ENCODE measurements at regions of chr16 and their contacts with region 1.

Region 1: DNA sequence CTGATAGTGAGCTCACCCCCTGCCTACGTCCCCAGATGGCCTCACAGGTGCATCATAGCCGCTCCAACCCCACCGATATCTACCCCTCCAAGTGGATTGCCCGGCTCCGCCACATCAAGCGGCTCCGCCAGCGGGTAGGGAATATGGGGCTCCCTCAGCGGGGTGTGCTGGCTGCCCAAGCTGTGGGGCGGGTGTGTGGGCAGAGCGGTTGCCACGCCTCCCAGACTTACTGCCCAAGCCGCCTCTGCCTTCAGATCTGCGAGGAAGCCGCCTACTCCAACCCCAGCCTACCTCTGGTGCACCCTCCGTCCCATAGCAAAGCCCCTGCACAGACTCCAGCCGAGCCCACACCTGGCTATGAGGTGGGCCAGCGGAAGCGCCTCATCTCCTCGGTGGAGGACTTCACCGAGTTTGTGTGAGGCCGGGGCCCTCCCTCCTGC is 40.4 kb downstream of the TSC2 start:
- DNase-seq: no peak
- ATAC-seq: no peak
- H3K4me3 ChIP-seq: no peak overlapping the region
- H3K4me3 Mint-ChIP-seq: no peak overlapping the region
- H3K27ac ChIP-seq: no peak overlapping the region
- H3K27ac Mint-ChIP-seq: no peak overlapping the region
- H3K4me1 ChIP-seq: no peaks in the 10 kb centered on the region
- H3K4me1 Mint-ChIP-seq: no peaks in the 10 kb centered on the region
- H3K27me3 ChIP-seq: no peaks in the 10 kb centered on the region
- H3K27me3 Mint-ChIP-seq: no peaks in the 10 kb centered on the region

Region 2: DNA sequence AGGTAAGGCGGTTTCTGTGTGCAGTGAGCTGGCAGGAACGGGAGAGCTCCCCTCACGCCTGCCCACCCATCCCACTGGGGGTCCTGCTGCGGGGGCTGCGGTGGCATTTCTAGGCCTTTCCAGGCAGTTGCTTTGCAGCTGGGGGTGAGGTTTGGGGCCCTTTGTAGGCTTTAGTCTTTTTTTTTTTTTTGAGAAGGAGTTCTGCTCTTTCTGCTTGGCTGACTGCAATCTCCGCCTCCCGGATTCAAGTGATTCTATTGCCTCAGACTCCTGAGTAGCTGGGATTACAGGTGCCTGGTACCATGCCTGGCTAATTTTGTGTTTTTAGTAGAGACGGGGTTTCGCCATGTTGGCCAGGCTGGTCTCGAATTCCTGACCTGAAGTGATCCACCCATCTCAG is 29.3 kb before region 1 on chr16:
- CTCF ChIA-PET with region 1: interaction called, 3 to 11 read pairs
- POLR2A ChIA-PET with region 1: no interaction called
- DNase-seq: no peak
- ATAC-seq: no peak
- H3K4me3 ChIP-seq: no peak overlapping the region
- H3K4me3 Mint-ChIP-seq: no peak overlapping the region
- H3K27ac ChIP-seq: no peak overlapping the region
- H3K27ac Mint-ChIP-seq: no peak overlapping the region
- H3K4me1 ChIP-seq: no peaks in the 10 kb centered on the region
- H3K4me1 Mint-ChIP-seq: no peaks in the 10 kb centered on the region
- H3K27me3 ChIP-seq: no peaks in the 10 kb centered on the region
- H3K27me3 Mint-ChIP-seq: no peaks in the 10 kb centered on the region

Region 3: GRCh38 chr16:2115591-2115973 is 27.4 kb after region 1 on chr16:
- CTCF ChIA-PET with region 1: no interaction called
- POLR2A ChIA-PET with region 1: no interaction called
- DNase-seq: no peak
- ATAC-seq: no peak
- H3K4me3 ChIP-seq: no peak overlapping the region
- H3K4me3 Mint-ChIP-seq: no peak overlapping the region
- H3K27ac ChIP-seq: no peak overlapping the region
- H3K27ac Mint-ChIP-seq: no peak overlapping the region
- H3K4me1 ChIP-seq: no peaks in the 10 kb centered on the region
- H3K4me1 Mint-ChIP-seq: peaks cover 0 to 5% (median 0%) of the 10 kb centered on the region in 3 donors
- H3K27me3 ChIP-seq: no peaks in the 10 kb centered on the region
- H3K27me3 Mint-ChIP-seq: no peaks in the 10 kb centered on the region

Measured in T-cell (primary cell).